ENCODE measurements at regions of chr13 and their contacts with region 1.

Region 1: DNA sequence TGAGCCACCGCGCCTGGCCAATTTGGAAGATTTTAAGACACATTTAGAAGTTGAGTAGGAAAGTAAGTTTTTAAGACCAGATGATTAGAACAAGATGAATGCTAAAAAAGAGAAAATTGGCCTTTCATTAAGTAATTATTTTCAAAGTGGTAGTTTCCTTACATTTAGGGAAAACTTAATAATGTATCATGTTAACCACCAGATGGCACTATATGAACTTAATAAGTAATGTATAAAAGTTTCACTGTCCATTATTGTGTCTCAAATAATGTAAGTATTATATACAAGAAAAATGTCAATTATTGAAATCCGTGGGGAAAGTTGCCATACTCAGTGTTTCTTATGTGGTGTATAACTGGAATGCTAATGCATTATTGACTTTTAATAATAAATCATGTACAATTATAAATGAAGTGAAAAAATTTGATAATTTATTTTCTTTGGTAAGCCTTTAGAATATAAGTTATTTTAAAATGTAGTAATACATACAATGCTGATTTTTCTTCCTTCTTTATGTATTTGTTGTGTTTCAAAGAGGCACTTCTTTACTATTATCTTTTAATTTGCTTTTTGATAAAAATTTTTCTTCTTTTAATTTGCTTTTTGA is 29.2 kb downstream of the COG6 start:
- DNase-seq: no peak
- H3K4me3 Mint-ChIP-seq: no peak overlapping the region
- H3K27ac Mint-ChIP-seq: no peak overlapping the region
- H3K4me1 Mint-ChIP-seq: peaks cover 16% of the 10 kb centered on the region
- H3K27me3 Mint-ChIP-seq: no peaks in the 10 kb centered on the region

Region 2: GRCh38 chr13:39105110-39105509 is 579.5 kb before region 1 on chr13:
- CTCF ChIA-PET with region 1: no interaction called
- intact Hi-C with region 1: no loop called
- DNase-seq: no peak
- H3K4me3 Mint-ChIP-seq: no peak overlapping the region
- H3K27ac Mint-ChIP-seq: no peak overlapping the region
- H3K4me1 Mint-ChIP-seq: peaks cover 3% of the 10 kb centered on the region
- H3K27me3 Mint-ChIP-seq: peaks cover 15% of the 10 kb centered on the region

Region 3: GRCh38 chr13:39900106-39900750 is 215.6 kb after region 1 on chr13:
- CTCF ChIA-PET with region 1: no interaction called
- intact Hi-C with region 1: no loop called
- DNase-seq: no peak
- H3K4me3 Mint-ChIP-seq: no peak overlapping the region
- H3K27ac Mint-ChIP-seq: no peak overlapping the region
- H3K4me1 Mint-ChIP-seq: peaks cover 2% of the 10 kb centered on the region
- H3K27me3 Mint-ChIP-seq: no peaks in the 10 kb centered on the region

Region 4: GRCh38 chr13:39935155-39935554 is 250.5 kb after region 1 on chr13:
- CTCF ChIA-PET with region 1: interaction called, 3 read pairs
- intact Hi-C with region 1: loop called (anchors 2 kb)
- DNase-seq: no peak
- H3K4me3 Mint-ChIP-seq: no peak overlapping the region
- H3K27ac Mint-ChIP-seq: no peak overlapping the region
- H3K4me1 Mint-ChIP-seq: peaks cover 23% of the 10 kb centered on the region
- H3K27me3 Mint-ChIP-seq: no peaks in the 10 kb centered on the region